ENCODE measurements at regions of chr22 and their contacts with region 1.

Region 1: GRCh38 chr22:20867179-20868024 is 8.6 kb downstream of the SNAP29 start:
- DNase-seq: peak; percentile 99 to 100 (median 100)
- ATAC-seq: peak; percentile 94
- H3K4me3 ChIP-seq: peak overlapping the region; percentile 8
- H3K27ac ChIP-seq: peak overlapping the region; percentile 74
- H3K4me1 ChIP-seq: peaks cover 59 to 62% of the 10 kb centered on the region in 2 experiments
- H3K27me3 ChIP-seq: no peaks in the 10 kb centered on the region
- CTCF ChIP-seq: peak in 1 of 3 experiments; percentile 15; a peak in 2 of 6 replicates
- EP300 ChIP-seq: peak; percentile 100
- POLR2A ChIP-seq: no peak
- RAD21 ChIP-seq: no peak

Region 2: DNA sequence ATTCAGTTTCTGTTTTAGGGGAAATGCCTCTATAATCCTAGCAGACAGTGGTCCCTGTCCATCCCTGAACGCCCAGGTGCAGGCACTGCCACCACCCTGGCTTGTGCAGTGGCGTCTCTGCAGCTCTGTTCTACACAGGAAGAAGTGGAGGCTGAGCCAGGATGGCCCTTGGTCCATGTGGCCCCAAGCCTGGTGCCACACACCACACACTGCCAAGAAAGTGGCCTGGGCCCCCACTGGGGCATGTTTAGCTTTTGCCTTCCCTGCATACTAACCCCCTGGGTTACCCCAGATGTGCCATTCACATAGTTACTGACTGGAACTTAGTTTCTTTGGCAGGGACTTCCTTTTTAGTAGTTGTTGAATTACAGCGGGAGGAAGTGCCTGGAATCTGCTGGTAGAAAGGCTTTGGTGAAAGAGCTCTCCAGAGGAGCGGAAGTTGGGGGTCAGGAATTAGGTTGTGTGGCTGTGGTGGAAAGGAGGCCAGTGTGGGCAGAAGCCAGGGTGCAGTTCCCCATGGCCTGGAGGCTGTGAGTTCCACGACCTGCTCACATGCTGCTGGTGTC is 291.1 kb before region 1 on chr22:
- CTCF ChIA-PET with region 1: no interaction called
- POLR2A ChIA-PET with region 1: no interaction called
- in situ Hi-C with region 1: no loop called
- intact Hi-C with region 1: no loop called
- DNase-seq: no peak
- ATAC-seq: no peak
- H3K4me3 ChIP-seq: no peak overlapping the region
- H3K27ac ChIP-seq: no peak overlapping the region; the same call in 2 of the 3 replicates
- H3K4me1 ChIP-seq: peaks cover 10 to 36% of the 10 kb centered on the region in 2 experiments
- H3K27me3 ChIP-seq: no peaks in the 10 kb centered on the region
- CTCF ChIP-seq: no peak
- EP300 ChIP-seq: no peak
- POLR2A ChIP-seq: 0 out of 2 replicates have a peak, but pooled peaks have one; percentile 18
- RAD21 ChIP-seq: no peak

Region 3: DNA sequence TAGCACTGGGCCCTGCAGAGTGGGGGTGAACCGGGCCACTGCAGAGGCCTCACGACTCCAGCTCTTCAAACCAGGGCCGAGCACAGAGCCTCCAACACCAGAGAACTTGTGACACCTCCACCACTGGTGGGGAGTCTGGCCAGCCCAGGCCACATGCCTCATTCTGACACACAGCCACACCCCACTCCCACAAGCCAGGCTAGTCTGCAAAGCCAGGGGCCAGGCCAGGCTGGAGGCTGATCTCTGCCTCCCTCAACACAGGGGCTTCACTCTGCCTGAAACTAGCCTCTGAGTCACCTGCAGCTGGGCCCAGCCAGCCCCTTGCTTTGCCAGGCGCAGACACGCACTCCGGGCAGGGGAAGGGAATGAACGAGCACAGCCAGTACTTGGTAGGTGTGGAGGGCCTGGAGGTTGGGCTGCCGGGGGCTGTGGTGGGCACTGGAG is 257.1 kb before region 1 on chr22:
- CTCF ChIA-PET with region 1: no interaction called
- POLR2A ChIA-PET with region 1: no interaction called
- in situ Hi-C with region 1: no loop called
- intact Hi-C with region 1: no loop called
- DNase-seq: no peak
- ATAC-seq: peak; percentile 3
- H3K4me3 ChIP-seq: no peak overlapping the region
- H3K27ac ChIP-seq: no peak overlapping the region
- H3K4me1 ChIP-seq: peaks cover 5 to 34% of the 10 kb centered on the region in 2 experiments; a peak in 3 of 5 replicates
- H3K27me3 ChIP-seq: peaks cover 60 to 89% of the 10 kb centered on the region in 2 experiments
- CTCF ChIP-seq: no peak
- EP300 ChIP-seq: no peak
- POLR2A ChIP-seq: no peak
- RAD21 ChIP-seq: no peak

Region 4: DNA sequence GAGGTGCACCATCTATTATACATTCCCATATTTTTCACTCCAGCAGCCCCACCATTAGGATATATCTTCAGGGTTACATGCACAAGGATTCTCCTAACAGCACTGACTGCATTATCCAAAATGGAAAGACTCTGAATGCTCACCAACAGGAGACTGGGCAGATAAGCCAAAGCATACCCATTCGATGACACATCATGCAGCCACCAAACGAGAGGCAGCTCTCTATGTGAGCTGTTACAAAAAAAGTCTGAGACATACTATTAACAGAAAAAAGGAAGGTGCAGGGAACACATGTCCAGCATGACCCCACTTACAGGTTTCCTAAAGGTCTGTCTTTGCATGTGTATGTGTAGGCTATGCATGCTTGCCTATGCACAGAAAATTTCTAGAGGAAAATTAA is 105.9 kb before region 1 on chr22:
- CTCF ChIA-PET with region 1: no interaction called
- POLR2A ChIA-PET with region 1: no interaction called
- in situ Hi-C with region 1: no loop called
- intact Hi-C with region 1: no loop called
- DNase-seq: no peak
- ATAC-seq: no peak
- H3K4me3 ChIP-seq: no peak overlapping the region
- H3K27ac ChIP-seq: no peak overlapping the region
- H3K4me1 ChIP-seq: no peaks in the 10 kb centered on the region
- H3K27me3 ChIP-seq: no peaks in the 10 kb centered on the region
- CTCF ChIP-seq: no peak
- EP300 ChIP-seq: no peak
- POLR2A ChIP-seq: no peak
- RAD21 ChIP-seq: no peak

Region 5: GRCh38 chr22:20803696-20804324 is 63.6 kb before region 1 on chr22:
- CTCF ChIA-PET with region 1: no interaction called
- POLR2A ChIA-PET with region 1: interaction called, 7 read pairs
- in situ Hi-C with region 1: no loop called
- intact Hi-C with region 1: loop called (anchors 1 kb)
- DNase-seq: peak; percentile 78 to 84 (median 84)
- ATAC-seq: peak; percentile 89
- H3K4me3 ChIP-seq: no peak overlapping the region
- H3K27ac ChIP-seq: no peak overlapping the region
- H3K4me1 ChIP-seq: peaks cover 3 to 13% of the 10 kb centered on the region in 2 experiments; a peak in 3 of 5 replicates
- H3K27me3 ChIP-seq: no peaks in the 10 kb centered on the region
- CTCF ChIP-seq: peak; percentile 94 to 100 (median 98)
- EP300 ChIP-seq: no peak
- POLR2A ChIP-seq: no peak
- RAD21 ChIP-seq: peak; percentile 95 to 99

Region 6: GRCh38 chr22:20840646-20841371 is 26.6 kb before region 1 on chr22:
- CTCF ChIA-PET with region 1: no interaction called
- POLR2A ChIA-PET with region 1: interaction called, 25 read pairs
- in situ Hi-C with region 1: no loop called
- intact Hi-C with region 1: no loop called
- DNase-seq: peak in 3 of 4 experiments; percentile 43 to 78 (median 51)
- ATAC-seq: peak; percentile 46
- H3K4me3 ChIP-seq: no peak overlapping the region
- H3K27ac ChIP-seq: no peak overlapping the region
- H3K4me1 ChIP-seq: peaks cover 17 to 33% of the 10 kb centered on the region in 2 experiments
- H3K27me3 ChIP-seq: no peaks in the 10 kb centered on the region; a peak in 1 of 5 replicates
- CTCF ChIP-seq: no peak
- EP300 ChIP-seq: no peak
- POLR2A ChIP-seq: no peak
- RAD21 ChIP-seq: no peak

Region 7: DNA sequence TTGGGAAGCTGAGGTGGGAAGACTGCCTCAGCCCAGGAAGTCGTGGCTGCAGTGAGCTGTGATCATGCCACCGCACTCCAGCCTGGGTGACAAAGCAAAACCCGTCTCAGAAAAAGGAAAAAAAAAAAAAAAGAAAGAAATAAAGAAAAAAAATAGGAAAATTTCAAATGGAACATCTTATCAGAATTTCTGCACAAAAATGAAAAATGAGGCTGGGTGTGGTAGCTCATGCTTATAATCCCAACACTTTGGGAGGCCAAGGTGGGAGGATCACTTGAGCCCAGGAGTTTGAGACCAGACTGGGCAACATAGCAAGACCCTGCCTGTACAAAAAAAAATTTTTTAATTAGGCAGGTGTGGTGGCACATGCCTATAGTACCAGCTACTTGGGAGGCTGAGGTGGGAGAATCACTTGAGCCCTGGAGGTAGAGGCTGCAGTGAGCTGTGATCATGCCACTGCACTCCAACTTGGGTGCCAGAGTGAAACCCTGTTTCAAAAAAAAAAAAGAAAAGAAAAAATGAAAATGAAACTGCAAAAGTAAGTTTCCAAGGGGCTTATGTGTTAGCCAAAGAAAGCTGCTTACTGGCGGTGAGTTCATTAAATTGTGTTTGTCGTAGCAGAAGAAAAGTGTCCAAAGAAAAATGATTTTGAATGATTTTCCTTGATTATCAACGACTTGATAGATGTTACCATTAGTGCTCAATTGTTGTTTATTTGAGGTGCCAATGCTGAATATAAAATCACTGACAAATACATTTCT is 42.3 kb after region 1 on chr22:
- CTCF ChIA-PET with region 1: no interaction called
- POLR2A ChIA-PET with region 1: interaction called, 24 read pairs
- in situ Hi-C with region 1: no loop called
- intact Hi-C with region 1: no loop called
- DNase-seq: no peak
- ATAC-seq: no peak
- H3K4me3 ChIP-seq: no peak overlapping the region
- H3K27ac ChIP-seq: no peak overlapping the region
- H3K4me1 ChIP-seq: peaks cover 0 to 7% of the 10 kb centered on the region in 2 experiments; a peak in 2 of 5 replicates
- H3K27me3 ChIP-seq: peaks cover 4 to 14% of the 10 kb centered on the region in 2 experiments
- CTCF ChIP-seq: no peak
- EP300 ChIP-seq: no peak
- POLR2A ChIP-seq: no peak
- RAD21 ChIP-seq: no peak

Region 8: DNA sequence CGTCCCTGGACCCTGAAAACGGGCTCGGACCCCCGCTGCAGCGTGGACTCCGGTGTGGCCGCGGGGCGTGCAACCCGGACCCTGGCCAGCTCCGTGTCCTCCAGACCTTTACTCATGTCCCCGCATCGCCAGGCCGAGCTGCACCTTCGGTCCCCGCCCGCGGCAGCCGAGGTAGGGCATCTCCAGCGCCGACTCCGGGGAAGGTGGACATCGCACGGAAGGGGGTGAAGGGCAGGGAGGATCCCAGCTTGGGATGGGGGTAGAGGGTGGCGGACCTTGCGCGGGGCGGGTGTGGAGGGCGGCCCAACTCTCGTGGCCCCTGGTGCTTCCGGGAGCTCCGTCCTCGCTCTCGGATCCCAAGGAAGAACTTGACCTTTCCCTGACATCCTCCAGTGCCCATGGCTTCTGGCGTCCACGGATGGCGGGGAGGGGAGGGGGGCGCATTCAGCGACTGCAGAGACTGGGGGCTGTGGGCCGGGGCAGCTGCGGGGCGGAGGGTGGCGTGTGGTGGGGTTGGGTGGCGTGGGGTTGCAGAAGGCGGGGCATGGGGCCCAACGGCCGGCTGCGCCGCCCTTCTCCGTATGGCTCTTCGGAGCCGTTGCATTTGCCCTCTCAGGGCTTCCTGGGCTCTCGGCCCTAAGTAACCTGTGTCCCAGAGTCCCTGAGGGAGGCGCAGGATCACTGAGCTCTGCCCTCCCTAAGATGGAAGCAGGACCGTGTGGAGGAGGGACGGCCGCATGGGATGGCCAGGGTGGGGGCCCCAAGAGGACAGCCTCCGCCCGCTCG is 90.1 kb after region 1 on chr22:
- CTCF ChIA-PET with region 1: no interaction called
- POLR2A ChIA-PET with region 1: interaction called, 18 read pairs
- in situ Hi-C with region 1: no loop called
- intact Hi-C with region 1: loop called (anchors 5 kb)
- DNase-seq: no peak
- ATAC-seq: 0 out of 3 replicates have a peak, but pooled peaks have one; percentile 3
- H3K4me3 ChIP-seq: no peak overlapping the region
- H3K27ac ChIP-seq: no peak overlapping the region
- H3K4me1 ChIP-seq: peaks cover 0 to 25% of the 10 kb centered on the region in 2 experiments; a peak in 2 of 5 replicates
- H3K27me3 ChIP-seq: peaks cover 0 to 2% of the 10 kb centered on the region in 2 experiments; a peak in 1 of 5 replicates
- CTCF ChIP-seq: no peak
- EP300 ChIP-seq: no peak
- POLR2A ChIP-seq: no peak
- RAD21 ChIP-seq: no peak

Region 9: GRCh38 chr22:20981787-20982562 is 114.6 kb after region 1 on chr22 and contains the start of gene LZTR1:
- CTCF ChIA-PET with region 1: no interaction called
- POLR2A ChIA-PET with region 1: interaction called, 12 read pairs
- in situ Hi-C with region 1: no loop called
- intact Hi-C with region 1: no loop called
- DNase-seq: peak; percentile 99 to 100 (median 100)
- ATAC-seq: peak; percentile 96
- H3K4me3 ChIP-seq: peak within 1 kb of the TSS; percentile 54
- H3K27ac ChIP-seq: peak within 1 kb of the TSS; percentile 86
- H3K4me1 ChIP-seq: peaks cover 19 to 48% of the 10 kb centered on the region in 2 experiments
- H3K27me3 ChIP-seq: peaks cover 3 to 9% of the 10 kb centered on the region in 2 experiments; a peak in 3 of 5 replicates
- CTCF ChIP-seq: peak; percentile 99 to 100 (median 99)
- EP300 ChIP-seq: no peak
- POLR2A ChIP-seq: no peak
- RAD21 ChIP-seq: peak; percentile 97
- polyA plus RNA-seq, gene LZTR1: 2.2 to 3.1 TPM

Region 10: GRCh38 chr22:21074188-21074724 is 206.9 kb after region 1 on chr22:
- CTCF ChIA-PET with region 1: no interaction called
- POLR2A ChIA-PET with region 1: no interaction called
- in situ Hi-C with region 1: no loop called
- intact Hi-C with region 1: no loop called
- DNase-seq: peak in 2 of 4 experiments; percentile 42 to 45
- ATAC-seq: peak; percentile 46
- H3K4me3 ChIP-seq: no peak overlapping the region
- H3K27ac ChIP-seq: no peak overlapping the region
- H3K4me1 ChIP-seq: peaks cover 0 to 21% of the 10 kb centered on the region in 2 experiments; a peak in 2 of 5 replicates
- H3K27me3 ChIP-seq: peaks cover 62 to 76% of the 10 kb centered on the region in 2 experiments
- CTCF ChIP-seq: no peak
- EP300 ChIP-seq: no peak
- POLR2A ChIP-seq: no peak
- RAD21 ChIP-seq: no peak

Measured in K562 (cell line).